GM10248 (cell line): ENCODE measurements at regions of chr13 and their contacts with region 1.

Region 1: DNA sequence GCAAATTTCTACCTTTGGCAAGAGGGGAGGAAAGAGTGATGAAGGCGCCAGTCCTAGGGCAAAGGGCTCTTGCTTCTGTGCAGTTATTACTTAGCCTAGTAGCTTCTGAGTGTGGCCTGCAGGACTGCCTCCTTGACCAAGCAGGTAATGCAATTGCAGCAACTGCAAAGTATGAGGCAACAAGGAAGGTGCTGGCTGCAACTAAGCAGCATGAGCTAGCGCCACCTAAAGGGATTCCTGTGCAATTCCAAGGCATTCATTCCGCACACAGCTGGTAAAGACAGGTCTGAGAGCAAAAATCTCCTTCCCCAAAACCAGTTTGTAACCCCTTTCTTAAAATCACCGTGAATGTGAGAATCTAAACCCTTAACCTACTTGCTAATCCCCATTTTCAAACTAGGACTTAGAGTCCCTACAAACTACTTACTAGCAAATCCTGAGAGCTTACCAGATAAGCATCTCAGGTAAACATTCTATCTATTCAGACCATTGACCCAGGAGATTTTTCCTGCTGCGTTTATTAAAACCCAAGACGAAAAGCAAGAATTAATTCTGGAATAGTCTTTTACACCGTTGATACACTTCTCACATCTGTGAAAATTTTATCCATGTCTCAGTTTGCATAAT is 62.9 kb downstream of the DCT start:
- DNase-seq: no peak
- CTCF ChIP-seq: no peak

Region 2: DNA sequence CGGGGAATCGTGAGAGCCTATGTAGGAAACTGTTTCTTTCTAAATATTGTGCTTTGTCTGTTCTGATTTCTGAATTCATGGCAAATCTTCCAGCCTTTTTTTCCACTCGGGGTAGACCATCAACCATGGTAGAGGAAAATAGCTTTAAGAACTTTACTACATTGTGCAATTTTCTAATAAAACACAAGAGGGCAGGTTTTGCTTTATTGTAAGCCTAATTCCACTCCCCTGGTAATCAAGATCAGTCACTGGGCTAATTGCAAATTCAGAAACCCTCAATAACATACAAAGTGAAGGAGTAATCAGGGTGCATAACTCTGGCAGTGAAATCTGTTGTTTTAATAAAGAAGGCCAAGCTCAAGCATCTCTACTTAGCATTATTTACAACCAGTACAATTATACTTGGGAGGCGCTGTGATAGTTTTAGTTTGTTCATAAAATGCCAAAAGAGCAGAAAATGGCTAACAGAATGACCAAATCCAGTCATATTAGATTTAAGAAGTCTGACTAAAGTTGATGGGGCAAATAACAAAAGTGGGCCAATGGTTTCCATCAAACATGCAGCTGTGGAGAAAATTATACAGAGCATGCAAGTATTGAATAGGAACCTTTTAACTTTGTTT is 19.1 kb after region 1 on chr13:
- CTCF ChIA-PET with region 1: interaction called, 39 read pairs
- POLR2A ChIA-PET with region 1: no interaction called
- DNase-seq: peak; percentile 32
- CTCF ChIP-seq: peak; percentile 57

Region 3: GRCh38 chr13:94470126-94470525 is 53.6 kb after region 1 on chr13:
- CTCF ChIA-PET with region 1: no interaction called
- POLR2A ChIA-PET with region 1: no interaction called
- DNase-seq: no peak
- CTCF ChIP-seq: no peak